Body of pancreas (tissue), 4 donors: ENCODE measurements at regions of chr6 and their contacts with region 1.

Region 1: GRCh38 chr6:3748208-3749066 is 3.1 kb downstream of the PXDC1 start:
- DNase-seq: peak; percentile 64 to 68 (median 66)
- ATAC-seq: no peak
- H3K4me3 ChIP-seq: no peak overlapping the region
- H3K27ac ChIP-seq: peak overlapping the region in 3 of 4 donors; percentile 22 to 94 (median 88)
- H3K4me1 ChIP-seq: peaks cover 44% of the 10 kb centered on the region
- H3K27me3 ChIP-seq: no peaks in the 10 kb centered on the region
- CTCF ChIP-seq: peak; percentile 12 to 58 (median 51)
- POLR2A ChIP-seq: no peak

Region 2: GRCh38 chr6:3297006-3297405 is 451.4 kb before region 1 on chr6:
- intact Hi-C with region 1: no loop called
- DNase-seq: peak in 2 of 4 donors; percentile 1 to 14
- ATAC-seq: no peak
- H3K4me3 ChIP-seq: no peak overlapping the region
- H3K27ac ChIP-seq: no peak overlapping the region
- H3K4me1 ChIP-seq: peaks cover 21% of the 10 kb centered on the region
- H3K27me3 ChIP-seq: no peaks in the 10 kb centered on the region
- CTCF ChIP-seq: no peak
- POLR2A ChIP-seq: no peak

Region 3: DNA sequence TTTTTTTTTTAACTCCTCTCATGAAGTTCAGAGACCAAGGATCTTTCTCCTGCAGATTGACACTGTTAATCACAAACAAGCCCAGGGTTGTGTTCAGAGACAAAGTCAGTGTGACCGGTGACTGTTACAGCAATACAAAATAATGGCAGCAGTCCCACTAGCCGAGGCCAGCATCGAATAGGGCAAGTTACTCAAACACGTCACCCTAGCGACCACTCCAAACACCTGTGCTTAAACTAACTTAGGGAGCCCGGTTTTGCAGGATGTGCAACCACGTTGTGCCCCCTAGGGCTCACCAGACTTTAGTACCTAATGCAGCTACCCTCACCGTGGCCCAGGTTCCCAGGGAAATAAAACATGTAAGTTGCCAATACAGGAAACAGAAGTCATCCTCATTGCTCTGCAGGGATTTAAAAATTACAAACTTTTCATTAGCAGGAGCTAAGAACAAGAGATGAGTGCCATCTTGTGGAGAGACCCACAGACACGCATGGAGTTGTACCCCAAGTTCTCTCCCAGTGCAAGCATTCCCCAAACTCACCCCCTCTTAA is 138.8 kb after region 1 on chr6:
- intact Hi-C with region 1: loop called (anchors 5 kb)
- DNase-seq: no peak
- ATAC-seq: no peak
- H3K4me3 ChIP-seq: no peak overlapping the region
- H3K27ac ChIP-seq: no peak overlapping the region
- H3K4me1 ChIP-seq: peaks cover 4% of the 10 kb centered on the region
- H3K27me3 ChIP-seq: no peaks in the 10 kb centered on the region
- CTCF ChIP-seq: peak in 5 of 7 experiments; percentile 21 to 41 (median 32)
- POLR2A ChIP-seq: no peak

Region 4: DNA sequence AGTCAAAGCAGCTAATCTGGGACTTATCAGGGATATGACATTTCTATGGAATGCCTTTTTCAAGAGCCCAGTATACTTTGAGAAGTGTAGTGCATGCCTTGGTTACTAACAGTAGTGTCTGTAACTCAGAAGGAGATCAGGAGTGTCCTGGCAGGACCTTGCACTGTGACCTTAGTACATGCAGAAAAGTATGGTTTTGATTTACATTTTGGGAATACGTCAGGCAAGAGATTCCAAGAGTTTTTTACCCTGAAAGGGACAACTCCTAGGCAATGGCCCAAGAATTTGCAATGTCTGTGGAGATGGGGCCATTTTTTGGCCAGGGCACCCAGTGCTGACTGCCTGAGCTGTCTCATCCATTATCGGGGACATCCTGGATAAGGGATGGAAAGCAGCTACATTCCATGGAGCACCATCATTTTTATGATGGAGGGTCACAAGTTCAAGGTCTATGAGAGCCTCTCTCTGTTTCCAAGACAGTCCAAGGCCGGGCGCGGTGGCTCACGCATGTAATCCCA is 180.9 kb after region 1 on chr6:
- intact Hi-C with region 1: loop called (anchors 5 kb)
- DNase-seq: peak in 2 of 4 donors; percentile 19 to 46
- ATAC-seq: peak; percentile 16
- H3K4me3 ChIP-seq: no peak overlapping the region
- H3K27ac ChIP-seq: peak overlapping the region in 1 of 4 donors; percentile 20
- H3K4me1 ChIP-seq: peaks cover 4% of the 10 kb centered on the region
- H3K27me3 ChIP-seq: no peaks in the 10 kb centered on the region
- CTCF ChIP-seq: no peak
- POLR2A ChIP-seq: no peak